Prostate gland (tissue), 2 donors: ENCODE measurements at regions of chr3 and their contacts with region 1.

Region 1: DNA sequence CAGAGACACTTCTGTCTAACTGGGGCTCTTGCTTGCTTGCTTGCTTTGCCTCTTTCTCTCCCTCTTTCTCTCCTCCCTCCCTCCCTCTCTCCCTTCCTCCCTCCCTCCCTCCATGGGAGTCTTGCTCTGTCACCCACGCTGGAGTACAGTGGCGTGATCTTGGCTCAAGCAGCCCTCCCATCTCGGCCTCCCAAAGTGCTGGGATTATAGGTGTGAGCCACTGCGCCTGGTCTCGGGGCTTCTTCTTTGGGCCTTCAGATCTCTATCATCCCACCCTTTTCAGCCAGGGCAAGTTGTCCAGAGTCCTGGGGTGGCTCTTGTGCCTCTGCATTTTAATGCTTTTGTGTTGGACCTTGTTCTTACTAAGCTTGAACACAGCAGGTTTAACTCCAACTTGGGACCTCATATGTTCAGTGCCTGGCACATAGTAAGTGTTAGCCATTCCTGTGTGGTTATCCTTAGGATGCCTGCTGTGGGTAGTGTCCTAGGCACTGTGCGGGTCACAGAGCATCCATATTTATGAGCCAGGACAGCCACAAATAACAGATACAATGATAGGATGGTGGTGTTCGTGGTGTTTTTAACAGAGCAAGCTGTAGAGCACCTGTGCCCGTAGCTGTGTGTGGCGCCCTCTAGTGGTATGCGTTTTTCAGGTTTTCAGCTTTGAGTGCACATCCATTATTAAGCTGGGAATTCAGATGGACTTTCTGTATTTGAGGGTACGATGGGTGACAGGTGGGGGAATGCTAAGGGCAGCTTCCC is 75.1 kb downstream of the CCK start:
- DNase-seq: peak; percentile 82
- H3K4me3 ChIP-seq: no peak overlapping the region
- H3K27ac ChIP-seq: no peak overlapping the region
- H3K4me1 ChIP-seq: no peaks in the 10 kb centered on the region
- H3K27me3 ChIP-seq: no peaks in the 10 kb centered on the region
- CTCF ChIP-seq: peak; percentile 84 to 97 (median 86)
- POLR2A ChIP-seq: no peak

Region 2: DNA sequence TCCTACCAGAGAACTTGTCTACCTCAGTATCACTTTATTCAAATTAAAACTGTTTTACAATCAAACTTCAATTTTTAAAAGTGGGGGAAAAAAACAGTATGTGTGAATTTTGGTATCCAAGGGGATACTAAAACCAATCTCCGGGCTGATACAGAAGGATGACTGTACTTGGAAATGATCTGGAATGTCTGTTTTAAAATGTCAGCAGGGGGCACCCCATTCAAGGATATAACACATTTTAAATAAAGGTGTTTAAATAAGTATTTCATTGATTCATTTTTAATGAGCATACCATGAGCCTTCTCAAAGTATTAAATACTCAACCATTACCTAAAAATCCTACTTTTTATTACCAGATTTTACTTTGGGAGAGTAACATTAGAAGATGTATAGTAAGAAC is 296.9 kb before region 1 on chr3:
- intact Hi-C with region 1: loop called (anchors 5 kb)
- DNase-seq: peak; percentile 29
- H3K4me3 ChIP-seq: no peak overlapping the region
- H3K27ac ChIP-seq: no peak overlapping the region
- H3K4me1 ChIP-seq: no peaks in the 10 kb centered on the region
- H3K27me3 ChIP-seq: no peaks in the 10 kb centered on the region
- CTCF ChIP-seq: peak in 3 of 4 experiments; percentile 31 to 56 (median 54)
- POLR2A ChIP-seq: no peak

Region 3: DNA sequence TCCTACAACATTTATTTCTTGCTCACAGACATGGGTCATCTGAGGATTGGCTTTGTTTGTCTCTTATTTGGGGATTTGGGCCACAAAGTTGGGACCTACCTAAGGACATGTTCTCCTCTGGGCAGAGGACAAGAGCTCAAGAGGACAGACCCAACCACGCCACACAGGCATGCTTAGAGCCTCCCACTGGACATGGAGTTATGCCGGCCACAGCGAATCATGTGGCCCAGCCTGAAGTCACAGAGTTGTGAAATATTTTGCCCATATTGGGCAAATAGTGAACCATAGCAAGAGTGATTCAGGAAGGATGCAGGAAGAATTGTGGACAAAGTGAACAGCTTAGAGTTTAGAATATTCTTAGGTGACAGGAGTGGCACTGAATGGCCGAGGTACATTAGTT is 89.8 kb before region 1 on chr3:
- intact Hi-C with region 1: loop called (anchors 5 kb)
- DNase-seq: no peak
- H3K4me3 ChIP-seq: no peak overlapping the region
- H3K27ac ChIP-seq: no peak overlapping the region
- H3K4me1 ChIP-seq: no peaks in the 10 kb centered on the region
- H3K27me3 ChIP-seq: no peaks in the 10 kb centered on the region
- CTCF ChIP-seq: no peak
- POLR2A ChIP-seq: no peak

Region 4: GRCh38 chr3:42117175-42118008 is 73.5 kb before region 1 on chr3:
- intact Hi-C with region 1: loop called (anchors 2 kb)
- DNase-seq: peak; percentile 45
- H3K4me3 ChIP-seq: no peak overlapping the region
- H3K27ac ChIP-seq: peak overlapping the region; percentile 11 to 25
- H3K4me1 ChIP-seq: peaks cover 8% of the 10 kb centered on the region
- H3K27me3 ChIP-seq: no peaks in the 10 kb centered on the region
- CTCF ChIP-seq: peak; percentile 27 to 64 (median 56)
- POLR2A ChIP-seq: no peak